ENCODE measurements at regions of chr10 and their contacts with region 1.

Region 1: GRCh38 chr10:35626971-35627507 is 15.1 kb downstream of the FZD8 start:
- DNase-seq: no peak
- H3K4me3 ChIP-seq: no peak overlapping the region
- H3K27ac ChIP-seq: no peak overlapping the region
- H3K4me1 ChIP-seq: no peaks in the 10 kb centered on the region
- H3K27me3 ChIP-seq: no peaks in the 10 kb centered on the region
- CTCF ChIP-seq: no peak
- EP300 ChIP-seq: no peak
- POLR2A ChIP-seq: no peak

Region 2: DNA sequence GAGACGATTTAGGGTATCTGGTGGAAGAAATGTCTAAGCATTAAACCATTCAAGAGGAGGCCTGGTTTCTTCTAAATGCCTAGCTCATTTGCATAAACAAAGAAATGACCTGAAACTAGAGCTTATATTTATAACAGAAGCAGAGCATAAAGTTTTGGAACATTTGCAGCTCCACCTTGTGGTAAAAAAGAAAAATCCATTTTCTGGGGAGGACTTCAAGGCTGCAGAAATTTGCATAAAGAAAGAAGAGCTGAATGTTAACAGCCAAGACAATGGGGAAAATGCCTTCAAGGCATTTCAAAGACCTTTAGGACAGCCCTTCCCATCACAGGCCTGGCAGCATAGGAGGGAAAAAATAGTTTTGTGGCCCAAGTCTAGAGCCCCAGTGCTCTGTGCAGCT is 1868.4 kb after region 1 on chr10:
- intact Hi-C with region 1: loop called (anchors 10 kb)
- DNase-seq: no peak
- H3K4me3 ChIP-seq: no peak overlapping the region
- H3K27ac ChIP-seq: no peak overlapping the region
- H3K4me1 ChIP-seq: no peaks in the 10 kb centered on the region
- H3K27me3 ChIP-seq: no peaks in the 10 kb centered on the region
- CTCF ChIP-seq: peak in 3 of 4 experiments; percentile 7 to 34 (median 27)
- EP300 ChIP-seq: no peak
- POLR2A ChIP-seq: no peak

Measured in sigmoid colon (tissue), 7 donors.